Kidney (tissue), 22 donors: ENCODE measurements at regions of chr1 and their contacts with region 1.

Region 1: DNA sequence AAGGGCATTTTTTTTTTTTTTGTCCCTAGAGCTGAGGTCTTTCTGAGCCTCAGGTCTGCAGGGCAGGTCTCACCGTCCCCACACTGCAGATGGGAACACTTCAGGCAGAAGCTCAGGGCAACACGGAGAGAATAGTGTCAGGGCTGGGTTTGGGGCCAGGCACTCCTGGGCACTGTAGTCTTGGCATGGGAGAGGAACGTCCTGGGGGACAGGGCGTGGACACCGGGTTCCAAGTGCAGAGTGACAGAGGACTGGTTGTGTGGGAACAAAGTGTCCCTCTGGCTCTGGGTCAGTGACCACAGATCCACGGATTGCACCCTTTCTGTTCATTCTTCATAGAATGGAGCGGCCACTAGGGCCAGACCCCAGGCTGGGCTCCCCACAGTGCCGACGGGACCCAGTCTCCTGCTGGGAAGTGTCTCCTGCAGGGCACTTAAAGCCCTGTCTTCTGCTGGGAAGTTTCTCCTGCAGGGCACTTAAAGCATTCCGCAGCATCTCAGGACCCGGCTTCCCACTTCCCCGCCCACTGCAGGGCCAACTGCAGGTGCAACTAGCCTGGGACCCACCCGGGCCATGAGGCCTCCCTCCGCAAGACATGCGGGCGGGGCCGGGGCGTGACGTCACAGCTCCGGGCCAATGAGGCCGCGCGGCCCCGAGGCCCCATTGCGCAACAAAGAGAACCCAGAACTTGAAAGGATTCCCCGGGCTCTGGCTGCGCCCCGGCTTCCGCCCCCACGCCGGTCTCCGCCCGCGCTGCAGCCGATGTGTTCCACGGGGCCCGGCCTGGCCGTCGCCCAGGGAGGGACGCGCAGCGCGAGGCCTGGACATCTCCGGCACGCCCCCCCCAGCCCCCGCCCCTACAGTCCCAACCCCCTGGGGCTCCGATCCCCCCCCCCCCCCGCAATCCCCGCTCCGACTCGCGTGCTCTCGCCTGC is 1.1 kb downstream of the GPR153 start:
- DNase-seq: peak; percentile 76 to 94 (median 85)
- H3K4me3 ChIP-seq: no peak overlapping the region
- H3K27ac ChIP-seq: no peak overlapping the region
- H3K4me1 ChIP-seq: peaks cover 0 to 7% (median 2%) of the 10 kb centered on the region in 3 donors
- H3K27me3 ChIP-seq: no peaks in the 10 kb centered on the region
- CTCF ChIP-seq: no peak

Region 2: DNA sequence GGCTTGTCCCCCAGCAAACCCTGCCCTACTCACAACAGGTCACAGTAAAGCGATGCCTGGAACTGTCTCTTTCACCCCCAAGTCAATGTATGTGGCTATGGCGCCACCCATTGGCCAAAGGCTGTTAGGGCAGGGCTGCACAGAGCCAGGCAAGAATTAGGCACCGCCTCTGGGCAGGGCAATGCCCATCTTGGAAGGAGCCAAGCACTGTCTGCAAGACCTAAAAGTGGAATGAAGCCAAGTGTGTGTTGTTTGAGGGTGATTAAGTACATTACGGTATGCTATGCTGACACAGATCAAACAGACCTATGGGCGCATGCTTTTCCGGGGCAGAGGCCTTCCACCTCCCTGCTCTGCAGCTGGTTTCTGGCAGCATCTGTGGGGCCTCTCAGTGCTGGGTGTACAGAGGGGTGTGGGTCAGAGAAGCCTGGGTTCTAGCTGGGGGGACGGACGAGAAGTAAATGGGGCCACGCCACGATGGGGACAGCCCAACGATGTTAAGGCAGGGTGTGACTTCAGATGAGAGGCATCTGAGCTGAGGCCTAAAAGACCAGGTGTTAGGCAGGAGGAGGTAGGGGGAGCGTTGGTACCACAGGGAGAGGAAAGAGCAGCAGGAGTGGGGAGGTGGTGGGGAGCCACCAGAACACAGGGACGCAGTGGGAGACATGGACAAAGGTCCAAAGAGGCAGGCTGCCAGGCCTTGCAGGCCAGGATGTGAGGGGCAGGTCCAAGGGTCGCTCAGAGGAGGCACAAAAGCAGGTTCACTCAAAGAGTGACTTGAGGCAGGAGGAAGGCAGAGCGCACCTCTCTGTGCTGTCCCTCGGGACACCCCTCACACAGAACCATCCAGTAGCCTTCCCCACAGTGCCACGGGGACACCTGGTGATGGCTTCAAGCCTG is 84.0 kb after region 1 on chr1:
- intact Hi-C with region 1: loop called (anchors 10 kb)
- DNase-seq: peak in 4 of 5 donors; percentile 75 to 89 (median 84)
- H3K4me3 ChIP-seq: no peak overlapping the region
- H3K27ac ChIP-seq: no peak overlapping the region
- H3K4me1 ChIP-seq: peaks cover 0 to 3% (median 0%) of the 10 kb centered on the region in 3 donors
- H3K27me3 ChIP-seq: no peaks in the 10 kb centered on the region
- CTCF ChIP-seq: peak; percentile 83